ENCODE measurements at regions of chr12 and their contacts with region 1.

Region 1: GRCh38 chr12:107093417-107094182 is at the start of gene CRY1:
- DNase-seq: peak; percentile 94
- H3K4me3 ChIP-seq: peak within 1 kb of the TSS; percentile 59 to 75 (median 65)
- H3K27ac ChIP-seq: peak within 1 kb of the TSS; percentile 94
- H3K4me1 ChIP-seq: peaks cover 24% of the 10 kb centered on the region
- H3K27me3 ChIP-seq: no peaks in the 10 kb centered on the region
- CTCF ChIP-seq: no peak
- total RNA-seq, gene CRY1: 10.0 to 12.3 TPM

Region 2: GRCh38 chr12:106955377-106956047 is 138.1 kb before region 1 on chr12 and contains the start of gene TMEM263:
- CTCF ChIA-PET with region 1: no interaction called
- dilution Hi-C with region 1: no loop called
- in situ Hi-C with region 1: no loop called
- intact Hi-C with region 1: loop called (anchors 2 kb)
- DNase-seq: peak; percentile 88
- H3K4me3 ChIP-seq: peak within 1 kb of the TSS; percentile 85 to 99 (median 88)
- H3K27ac ChIP-seq: peak within 1 kb of the TSS; percentile 87
- H3K4me1 ChIP-seq: peaks cover 15% of the 10 kb centered on the region
- H3K27me3 ChIP-seq: no peaks in the 10 kb centered on the region
- CTCF ChIP-seq: peak in 1 of 2 donors; percentile 15
- total RNA-seq, gene TMEM263: 48.7 to 51.3 TPM

Region 3: GRCh38 chr12:107079172-107080011 is 14.2 kb before region 1 on chr12:
- CTCF ChIA-PET with region 1: interaction called, 4 read pairs
- dilution Hi-C with region 1: no loop called
- in situ Hi-C with region 1: no loop called
- intact Hi-C with region 1: loop called (anchors 1 kb)
- DNase-seq: peak; percentile 44
- H3K4me3 ChIP-seq: no peak overlapping the region
- H3K27ac ChIP-seq: no peak overlapping the region
- H3K4me1 ChIP-seq: no peaks in the 10 kb centered on the region
- H3K27me3 ChIP-seq: no peaks in the 10 kb centered on the region
- CTCF ChIP-seq: peak; percentile 69 to 74

Region 4: GRCh38 chr12:107109741-107110719 is 16.4 kb after region 1 on chr12:
- CTCF ChIA-PET with region 1: interaction called, 15 read pairs
- dilution Hi-C with region 1: no loop called
- in situ Hi-C with region 1: no loop called
- intact Hi-C with region 1: no loop called
- DNase-seq: no peak
- H3K4me3 ChIP-seq: no peak overlapping the region
- H3K27ac ChIP-seq: no peak overlapping the region
- H3K4me1 ChIP-seq: no peaks in the 10 kb centered on the region
- H3K27me3 ChIP-seq: peaks cover 2% of the 10 kb centered on the region
- CTCF ChIP-seq: no peak